CD8-positive, alpha-beta T cell (primary cell): ENCODE measurements at regions of chr13 and their contacts with region 1.

Region 1: GRCh38 chr13:21181671-21182070 is 5.2 kb downstream of the MRPL57 start:
- DNase-seq: no peak
- ATAC-seq: no peak
- H3K4me3 ChIP-seq: no peak overlapping the region
- H3K4me3 Mint-ChIP-seq: no peak overlapping the region
- H3K27ac ChIP-seq: no peak overlapping the region
- H3K27ac Mint-ChIP-seq: no peak overlapping the region
- H3K4me1 ChIP-seq: peaks cover 13% of the 10 kb centered on the region
- H3K4me1 Mint-ChIP-seq: peaks cover 20% of the 10 kb centered on the region
- H3K27me3 ChIP-seq: no peaks in the 10 kb centered on the region
- H3K27me3 Mint-ChIP-seq: no peaks in the 10 kb centered on the region
- CTCF ChIP-seq: no peak

Region 2: DNA sequence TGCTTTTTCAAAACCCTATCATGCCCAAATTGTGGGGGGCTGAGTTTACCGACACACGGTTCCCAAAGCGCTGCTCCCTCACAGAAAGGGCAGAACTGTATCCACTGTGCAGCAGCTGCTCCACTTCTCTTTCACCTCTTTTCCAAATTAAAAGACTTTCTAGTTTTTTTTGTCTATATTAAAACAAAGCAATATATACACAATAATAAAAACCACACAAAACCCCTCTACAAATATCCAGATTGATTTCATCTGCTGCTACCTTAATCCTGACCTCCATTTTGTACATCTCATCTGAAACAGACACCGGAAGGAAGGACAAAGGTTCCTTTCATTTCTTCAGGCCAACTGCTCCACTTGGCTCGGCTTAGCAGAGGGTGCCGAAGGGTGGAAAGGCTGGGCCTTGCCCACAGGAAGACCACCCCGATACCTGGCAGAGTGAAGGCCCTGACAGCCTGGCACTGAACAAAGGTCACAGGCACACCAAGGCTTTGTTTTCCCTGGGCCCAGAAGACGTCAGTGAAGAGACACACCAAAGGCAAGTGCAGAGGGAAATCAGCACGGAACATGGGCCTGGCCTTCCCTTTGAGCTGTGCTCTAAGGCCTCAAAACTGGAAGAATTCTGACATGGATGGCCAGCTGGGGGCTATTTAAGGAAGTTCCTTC is 191.9 kb before region 1 on chr13:
- CTCF ChIA-PET with region 1: no interaction called
- POLR2A ChIA-PET with region 1: no interaction called
- intact Hi-C with region 1: no loop called
- DNase-seq: no peak
- ATAC-seq: no peak
- H3K4me3 ChIP-seq: no peak overlapping the region
- H3K4me3 Mint-ChIP-seq: no peak overlapping the region
- H3K27ac ChIP-seq: no peak overlapping the region
- H3K27ac Mint-ChIP-seq: no peak overlapping the region
- H3K4me1 ChIP-seq: no peaks in the 10 kb centered on the region
- H3K4me1 Mint-ChIP-seq: no peaks in the 10 kb centered on the region
- H3K27me3 ChIP-seq: no peaks in the 10 kb centered on the region
- H3K27me3 Mint-ChIP-seq: no peaks in the 10 kb centered on the region
- CTCF ChIP-seq: no peak

Region 3: DNA sequence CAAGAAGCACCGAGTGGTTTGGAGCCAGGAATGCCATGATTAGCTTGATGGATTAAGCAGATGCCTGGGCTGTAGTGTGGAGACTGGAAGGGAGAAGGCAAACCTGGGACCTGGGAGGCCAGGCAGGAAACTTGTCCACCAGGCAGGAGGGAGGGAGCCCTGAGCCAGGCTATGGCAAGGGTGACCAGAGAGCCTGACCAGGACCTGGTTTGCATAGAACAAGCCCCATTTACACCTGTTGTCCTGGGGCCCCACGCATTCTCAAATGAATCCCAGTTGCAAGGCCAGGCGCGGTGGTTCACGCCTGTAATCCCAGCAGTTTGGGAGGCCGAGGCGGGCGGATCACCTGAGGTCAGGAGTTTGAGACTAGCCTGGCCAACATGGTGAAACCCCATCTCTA is 70.1 kb before region 1 on chr13:
- CTCF ChIA-PET with region 1: interaction called, 4 read pairs
- POLR2A ChIA-PET with region 1: no interaction called
- intact Hi-C with region 1: loop called (anchors 1 to 2 kb)
- DNase-seq: no peak
- ATAC-seq: no peak
- H3K4me3 ChIP-seq: no peak overlapping the region
- H3K4me3 Mint-ChIP-seq: no peak overlapping the region
- H3K27ac ChIP-seq: no peak overlapping the region
- H3K27ac Mint-ChIP-seq: no peak overlapping the region
- H3K4me1 ChIP-seq: no peaks in the 10 kb centered on the region
- H3K4me1 Mint-ChIP-seq: peaks cover 2% of the 10 kb centered on the region
- H3K27me3 ChIP-seq: no peaks in the 10 kb centered on the region
- H3K27me3 Mint-ChIP-seq: peaks cover 2% of the 10 kb centered on the region
- CTCF ChIP-seq: no peak

Region 4: GRCh38 chr13:21800837-21801616 is 619.4 kb after region 1 on chr13:
- CTCF ChIA-PET with region 1: no interaction called
- POLR2A ChIA-PET with region 1: no interaction called
- intact Hi-C with region 1: no loop called
- DNase-seq: no peak
- ATAC-seq: no peak
- H3K4me3 ChIP-seq: no peak overlapping the region
- H3K4me3 Mint-ChIP-seq: no peak overlapping the region
- H3K27ac ChIP-seq: no peak overlapping the region
- H3K27ac Mint-ChIP-seq: no peak overlapping the region
- H3K4me1 ChIP-seq: no peaks in the 10 kb centered on the region
- H3K4me1 Mint-ChIP-seq: no peaks in the 10 kb centered on the region
- H3K27me3 ChIP-seq: no peaks in the 10 kb centered on the region
- H3K27me3 Mint-ChIP-seq: no peaks in the 10 kb centered on the region
- CTCF ChIP-seq: no peak